CD4-positive, alpha-beta memory T cell (primary cell): ENCODE measurements at regions of chr14 and their contacts with region 1.

Region 1: GRCh38 chr14:24080888-24081738 is 9.8 kb downstream of the CPNE6 start:
- DNase-seq: peak; percentile 64 to 77 (median 67)
- H3K4me3 ChIP-seq: peak overlapping the region; percentile 39 to 60
- H3K4me3 Mint-ChIP-seq: peak overlapping the region; percentile 81 to 90 (median 87)
- H3K27ac ChIP-seq: peak overlapping the region; percentile 50
- H3K27ac Mint-ChIP-seq: peak overlapping the region; percentile 64 to 92 (median 88)
- H3K4me1 ChIP-seq: peaks cover 14% of the 10 kb centered on the region
- H3K4me1 Mint-ChIP-seq: peaks cover 10 to 27% (median 15%) of the 10 kb centered on the region in 4 donors
- H3K27me3 ChIP-seq: no peaks in the 10 kb centered on the region
- H3K27me3 Mint-ChIP-seq: no peaks in the 10 kb centered on the region

Region 2: DNA sequence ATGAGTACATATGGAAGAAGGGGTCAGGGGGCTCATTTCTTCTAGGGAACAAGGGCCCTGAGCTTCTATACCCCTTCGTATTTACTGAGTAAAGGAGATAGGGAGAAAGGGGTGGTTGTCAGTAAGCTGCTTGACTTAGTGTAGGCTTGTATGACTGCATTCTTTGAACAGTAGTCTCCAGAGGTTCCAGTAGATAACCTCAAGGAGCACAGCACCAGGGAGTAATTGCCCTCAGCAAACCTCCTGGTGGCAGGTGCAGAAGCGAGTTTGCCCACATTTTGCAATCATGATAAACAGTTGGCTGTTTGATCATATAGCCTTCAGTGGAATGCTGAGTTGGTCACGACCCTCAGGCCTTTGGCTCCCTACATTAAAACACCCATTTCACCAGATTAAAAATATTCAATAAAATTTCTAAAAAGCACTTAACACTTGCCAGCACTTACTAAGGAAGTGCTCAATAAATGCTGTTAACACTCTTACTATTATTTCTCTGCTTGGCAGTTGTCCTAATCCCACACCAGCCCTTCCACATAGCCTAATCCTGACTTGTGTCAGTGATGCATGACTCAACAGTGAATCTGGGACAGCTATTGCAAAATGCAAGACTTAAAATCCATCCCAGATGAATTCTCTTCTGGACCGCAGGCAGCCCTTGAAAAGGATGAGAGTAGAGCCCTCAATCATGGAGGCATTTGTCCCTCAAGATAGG is 96.1 kb before region 1 on chr14:
- CTCF ChIA-PET with region 1: no interaction called
- POLR2A ChIA-PET with region 1: no interaction called
- intact Hi-C with region 1: loop called (anchors 10 kb)
- DNase-seq: no peak
- H3K4me3 ChIP-seq: no peak overlapping the region
- H3K4me3 Mint-ChIP-seq: no peak overlapping the region
- H3K27ac ChIP-seq: no peak overlapping the region
- H3K27ac Mint-ChIP-seq: peak overlapping the region in 1 of 7 donors; percentile 48
- H3K4me1 ChIP-seq: peaks cover 7% of the 10 kb centered on the region
- H3K4me1 Mint-ChIP-seq: peaks cover 13 to 25% (median 16%) of the 10 kb centered on the region in 4 donors
- H3K27me3 ChIP-seq: no peaks in the 10 kb centered on the region
- H3K27me3 Mint-ChIP-seq: no peaks in the 10 kb centered on the region

Region 3: DNA sequence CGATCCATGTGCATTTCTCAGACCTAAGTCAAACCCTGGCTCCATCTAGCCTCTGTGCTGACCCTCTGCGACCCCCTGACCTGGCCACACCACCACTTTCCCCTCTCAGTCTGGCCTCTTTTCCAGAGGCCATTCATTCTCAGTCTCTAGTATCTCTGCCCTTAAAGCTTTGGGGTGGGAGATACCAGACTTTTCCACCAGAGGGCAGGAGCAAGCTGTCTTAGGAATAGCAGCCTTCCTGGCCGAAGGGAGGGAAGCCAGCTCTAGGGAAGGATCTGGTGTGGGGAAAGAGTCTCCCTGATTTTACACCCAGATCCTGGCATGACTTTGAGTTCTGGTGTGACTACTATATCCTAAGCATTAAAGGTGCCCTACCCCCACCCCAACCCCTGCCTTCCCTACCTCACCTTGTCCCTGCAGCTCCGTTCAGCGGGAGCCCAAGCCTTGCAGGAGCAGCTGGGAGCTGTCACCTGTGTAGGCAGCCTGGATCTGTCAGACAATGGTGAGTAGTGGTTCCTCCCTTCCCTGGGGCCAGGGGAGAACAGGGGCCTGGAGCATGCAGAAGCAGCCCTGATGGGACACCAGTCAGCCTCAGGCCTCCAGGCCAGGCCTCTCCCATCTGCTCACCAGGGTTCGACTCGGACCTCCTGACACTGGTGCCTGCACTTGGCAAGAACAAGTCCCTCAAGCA is 22.7 kb before region 1 on chr14:
- CTCF ChIA-PET with region 1: interaction called, 95 read pairs
- POLR2A ChIA-PET with region 1: interaction called, 25 read pairs
- intact Hi-C with region 1: no loop called
- DNase-seq: peak; percentile 49 to 63 (median 61)
- H3K4me3 ChIP-seq: no peak overlapping the region
- H3K4me3 Mint-ChIP-seq: peak overlapping the region in 1 of 8 donors; percentile 59
- H3K27ac ChIP-seq: no peak overlapping the region
- H3K27ac Mint-ChIP-seq: peak overlapping the region in 6 of 7 donors; percentile 10 to 81 (median 36)
- H3K4me1 ChIP-seq: no peaks in the 10 kb centered on the region
- H3K4me1 Mint-ChIP-seq: peaks cover 2 to 8% (median 3%) of the 10 kb centered on the region in 4 donors
- H3K27me3 ChIP-seq: no peaks in the 10 kb centered on the region
- H3K27me3 Mint-ChIP-seq: peaks cover 2% of the 10 kb centered on the region in 2 donors

Region 4: GRCh38 chr14:24135834-24136542 is 54.9 kb after region 1 on chr14 and contains the start of gene PSME1:
- CTCF ChIA-PET with region 1: no interaction called
- POLR2A ChIA-PET with region 1: interaction called, 16 read pairs
- intact Hi-C with region 1: no loop called
- DNase-seq: peak; percentile 92 to 94 (median 93)
- H3K4me3 ChIP-seq: peak within 1 kb of the TSS; percentile 30 to 87
- H3K4me3 Mint-ChIP-seq: peak within 1 kb of the TSS; percentile 87 to 94 (median 92)
- H3K27ac ChIP-seq: peak within 1 kb of the TSS; percentile 84
- H3K27ac Mint-ChIP-seq: peak within 1 kb of the TSS; percentile 88 to 96 (median 94)
- H3K4me1 ChIP-seq: peaks cover 59% of the 10 kb centered on the region
- H3K4me1 Mint-ChIP-seq: peaks cover 35 to 70% (median 55%) of the 10 kb centered on the region in 4 donors
- H3K27me3 ChIP-seq: no peaks in the 10 kb centered on the region
- H3K27me3 Mint-ChIP-seq: no peaks in the 10 kb centered on the region
- total RNA-seq, gene PSME1: 257 to 273 TPM

Region 5: DNA sequence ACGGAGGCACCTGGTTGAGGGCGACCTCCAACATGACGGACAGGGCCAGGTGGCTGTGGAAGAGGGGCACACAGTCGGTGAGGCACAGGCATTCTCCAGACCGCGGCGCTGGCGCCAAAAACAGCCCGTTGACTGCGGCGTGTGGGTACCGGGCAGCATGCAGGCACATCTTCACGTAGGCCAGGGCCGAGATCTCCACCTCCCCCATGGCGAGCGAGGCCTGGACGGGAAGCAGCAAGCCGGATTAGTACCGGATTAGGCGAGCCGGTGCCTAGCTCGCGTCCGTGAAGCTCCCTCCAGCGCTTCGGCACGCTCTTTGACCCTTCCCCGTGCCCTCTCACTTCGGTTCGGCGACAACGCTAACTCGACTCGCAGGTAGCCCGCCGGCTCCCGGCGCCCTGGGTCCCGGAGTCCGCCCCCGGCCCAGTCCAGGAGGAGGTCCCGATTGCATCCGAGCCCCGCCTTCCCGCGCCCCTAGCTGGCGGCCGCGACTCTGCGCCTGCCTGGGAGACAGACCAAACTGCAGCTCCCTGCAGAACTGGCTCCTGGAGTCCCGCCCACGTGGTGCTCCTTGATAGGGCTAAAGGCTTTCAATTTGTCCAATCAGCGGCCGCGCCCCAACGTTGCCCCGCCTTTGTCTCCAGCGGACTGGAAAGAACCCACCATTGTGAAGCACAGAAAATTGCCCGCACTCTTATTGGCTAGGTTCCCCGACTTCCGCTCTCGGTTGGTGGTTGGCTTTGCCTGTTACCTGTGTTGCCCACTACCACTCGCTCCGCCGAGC is 60.2 kb after region 1 on chr14 and contains the start of gene EMC9:
- CTCF ChIA-PET with region 1: no interaction called
- POLR2A ChIA-PET with region 1: interaction called, 16 read pairs
- intact Hi-C with region 1: no loop called
- DNase-seq: peak; percentile 98 to 100 (median 99)
- H3K4me3 ChIP-seq: peak within 1 kb of the TSS; percentile 83 to 91
- H3K4me3 Mint-ChIP-seq: peak within 1 kb of the TSS; percentile 85 to 97 (median 94)
- H3K27ac ChIP-seq: peak within 1 kb of the TSS; percentile 77
- H3K27ac Mint-ChIP-seq: peak within 1 kb of the TSS; percentile 76 to 95 (median 94)
- H3K4me1 ChIP-seq: peaks cover 74% of the 10 kb centered on the region
- H3K4me1 Mint-ChIP-seq: peaks cover 38 to 94% (median 61%) of the 10 kb centered on the region in 4 donors
- H3K27me3 ChIP-seq: no peaks in the 10 kb centered on the region
- H3K27me3 Mint-ChIP-seq: no peaks in the 10 kb centered on the region
- total RNA-seq, gene EMC9: 33.0 to 33.9 TPM

Region 6: GRCh38 chr14:24146978-24147760 is 66.1 kb after region 1 on chr14 and contains the start of gene RNF31:
- CTCF ChIA-PET with region 1: no interaction called
- POLR2A ChIA-PET with region 1: interaction called, 13 read pairs
- intact Hi-C with region 1: no loop called
- DNase-seq: peak; percentile 95 to 99 (median 97)
- H3K4me3 ChIP-seq: peak within 1 kb of the TSS; percentile 85 to 99
- H3K4me3 Mint-ChIP-seq: peak within 1 kb of the TSS; percentile 97 to 100 (median 98)
- H3K27ac ChIP-seq: peak within 1 kb of the TSS; percentile 92
- H3K27ac Mint-ChIP-seq: peak within 1 kb of the TSS; percentile 95 to 99 (median 98)
- H3K4me1 ChIP-seq: peaks cover 63% of the 10 kb centered on the region
- H3K4me1 Mint-ChIP-seq: peaks cover 32 to 80% (median 54%) of the 10 kb centered on the region in 4 donors
- H3K27me3 ChIP-seq: no peaks in the 10 kb centered on the region
- H3K27me3 Mint-ChIP-seq: no peaks in the 10 kb centered on the region
- total RNA-seq, gene RNF31: 108 to 113 TPM